ENCODE measurements at regions of chr18 and their contacts with region 1.

Region 1: GRCh38 chr18:63523660-63524059 is 18.5 kb upstream of the SERPINB12 start:
- DNase-seq: no peak
- ATAC-seq: no peak
- H3K4me3 ChIP-seq: no peak overlapping the region
- H3K27ac ChIP-seq: no peak overlapping the region
- H3K4me1 ChIP-seq: no peaks in the 10 kb centered on the region
- H3K27me3 ChIP-seq: no peaks in the 10 kb centered on the region

Region 2: GRCh38 chr18:63848159-63848558 is 324.5 kb after region 1 on chr18:
- intact Hi-C with region 1: loop called (anchors 5 to 10 kb)
- DNase-seq: no peak
- ATAC-seq: no peak
- H3K4me3 ChIP-seq: no peak overlapping the region
- H3K27ac ChIP-seq: no peak overlapping the region
- H3K4me1 ChIP-seq: no peaks in the 10 kb centered on the region
- H3K27me3 ChIP-seq: no peaks in the 10 kb centered on the region

Measured in right cardiac atrium (tissue), 5 donors.